HepG2 (cell line): ENCODE measurements at regions of chr6 and their contacts with region 1.

Region 1: GRCh38 chr6:63941747-63942470 is 306.3 kb downstream of the PHF3 start:
- DNase-seq: peak; percentile 94
- ATAC-seq: peak; percentile 99
- H3K4me3 ChIP-seq: no peak overlapping the region
- H3K27ac ChIP-seq: peak overlapping the region; percentile 35
- H3K4me1 ChIP-seq: peaks cover 29% of the 10 kb centered on the region
- H3K27me3 ChIP-seq: no peaks in the 10 kb centered on the region
- CTCF ChIP-seq: 0 out of 2 replicates have a peak, but pooled peaks have one; percentile 5
- EP300 ChIP-seq: peak; percentile 46 to 80; a peak in 2 of 4 replicates
- POLR2A ChIP-seq: no peak
- RAD21 ChIP-seq: no peak

Region 2: GRCh38 chr6:63790334-63790733 is 151.6 kb before region 1 on chr6:
- CTCF ChIA-PET with region 1: no interaction called
- POLR2A ChIA-PET with region 1: no interaction called
- in situ Hi-C with region 1: no loop called
- intact Hi-C with region 1: no loop called
- DNase-seq: no peak
- ATAC-seq: no peak
- H3K4me3 ChIP-seq: no peak overlapping the region
- H3K27ac ChIP-seq: no peak overlapping the region
- H3K4me1 ChIP-seq: peaks cover 8% of the 10 kb centered on the region
- H3K27me3 ChIP-seq: no peaks in the 10 kb centered on the region
- CTCF ChIP-seq: no peak
- EP300 ChIP-seq: no peak
- POLR2A ChIP-seq: no peak
- RAD21 ChIP-seq: no peak

Region 3: GRCh38 chr6:63904650-63905248 is 37.2 kb before region 1 on chr6:
- CTCF ChIA-PET with region 1: no interaction called
- POLR2A ChIA-PET with region 1: no interaction called
- in situ Hi-C with region 1: no loop called
- intact Hi-C with region 1: no loop called
- DNase-seq: no peak
- ATAC-seq: no peak
- H3K4me3 ChIP-seq: no peak overlapping the region
- H3K27ac ChIP-seq: no peak overlapping the region
- H3K4me1 ChIP-seq: no peaks in the 10 kb centered on the region
- H3K27me3 ChIP-seq: 0 out of 5 replicates have a peak, but pooled peaks cover 0 to 5% of the 10 kb centered on the region in 2 experiments
- CTCF ChIP-seq: no peak
- EP300 ChIP-seq: no peak
- POLR2A ChIP-seq: no peak
- RAD21 ChIP-seq: no peak

Region 4: GRCh38 chr6:63963769-63964315 is 21.9 kb after region 1 on chr6:
- CTCF ChIA-PET with region 1: no interaction called
- POLR2A ChIA-PET with region 1: no interaction called
- in situ Hi-C with region 1: no loop called
- intact Hi-C with region 1: no loop called
- DNase-seq: no peak
- ATAC-seq: no peak
- H3K4me3 ChIP-seq: no peak overlapping the region
- H3K27ac ChIP-seq: no peak overlapping the region
- H3K4me1 ChIP-seq: no peaks in the 10 kb centered on the region
- H3K27me3 ChIP-seq: no peaks in the 10 kb centered on the region
- CTCF ChIP-seq: 0 out of 2 replicates have a peak, but pooled peaks have one; percentile 10
- EP300 ChIP-seq: no peak
- POLR2A ChIP-seq: no peak
- RAD21 ChIP-seq: no peak

Region 5: GRCh38 chr6:64175296-64175695 is 233.4 kb after region 1 on chr6:
- CTCF ChIA-PET with region 1: no interaction called
- POLR2A ChIA-PET with region 1: no interaction called
- in situ Hi-C with region 1: no loop called
- intact Hi-C with region 1: no loop called
- DNase-seq: no peak
- ATAC-seq: no peak
- H3K4me3 ChIP-seq: no peak overlapping the region
- H3K27ac ChIP-seq: no peak overlapping the region
- H3K4me1 ChIP-seq: no peaks in the 10 kb centered on the region
- H3K27me3 ChIP-seq: no peaks in the 10 kb centered on the region
- CTCF ChIP-seq: no peak
- EP300 ChIP-seq: no peak
- POLR2A ChIP-seq: no peak
- RAD21 ChIP-seq: no peak

Region 6: DNA sequence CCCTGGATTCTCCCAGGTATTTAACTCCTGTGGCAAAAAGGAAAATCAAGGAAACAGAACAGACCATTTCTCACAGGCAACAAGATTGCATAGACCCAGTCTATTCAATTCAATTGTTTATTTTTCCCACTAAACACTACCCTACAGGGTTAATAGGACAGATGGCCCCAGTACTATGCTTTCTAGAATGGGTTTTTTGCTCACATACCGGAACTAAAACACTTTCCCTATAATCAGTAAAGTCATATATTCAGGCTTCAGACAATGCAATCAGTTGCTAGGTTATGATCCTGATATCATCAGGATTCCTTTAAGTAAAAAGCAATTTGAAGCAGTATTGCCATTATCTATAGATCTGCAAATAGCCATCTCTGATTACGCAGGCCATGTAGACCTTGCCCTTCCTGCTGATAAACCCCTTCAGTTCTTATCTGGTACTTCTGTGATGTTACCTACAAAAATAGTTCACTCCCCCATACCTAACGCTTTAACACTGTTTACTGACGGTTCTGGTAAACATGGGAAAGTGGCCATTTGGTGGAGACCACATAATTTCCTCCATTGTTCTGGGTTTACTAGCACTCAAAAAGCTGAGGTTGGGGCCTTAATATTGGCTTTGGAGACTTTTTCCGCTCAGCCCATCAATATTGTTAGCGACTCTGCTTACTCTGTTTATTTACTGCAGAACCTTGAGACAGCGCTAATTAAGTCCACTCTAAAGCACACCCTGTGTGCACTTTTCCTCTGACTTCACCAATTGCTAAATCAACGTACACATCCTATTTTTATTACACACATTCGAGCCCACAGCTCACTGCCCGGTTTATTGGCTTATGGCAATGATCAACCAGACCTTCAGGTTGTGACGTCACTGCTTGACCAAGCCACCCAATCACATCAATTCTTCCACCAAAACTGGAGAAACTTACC is 359.7 kb after region 1 on chr6:
- CTCF ChIA-PET with region 1: no interaction called
- POLR2A ChIA-PET with region 1: no interaction called
- in situ Hi-C with region 1: no loop called
- intact Hi-C with region 1: loop called (anchors 1 kb)
- DNase-seq: peak; percentile 91
- ATAC-seq: peak; percentile 96
- H3K4me3 ChIP-seq: no peak overlapping the region
- H3K27ac ChIP-seq: peak overlapping the region; percentile 41
- H3K4me1 ChIP-seq: peaks cover 37% of the 10 kb centered on the region
- H3K27me3 ChIP-seq: no peaks in the 10 kb centered on the region
- CTCF ChIP-seq: no peak
- EP300 ChIP-seq: peak in 1 of 2 experiments; percentile 86; a peak in 2 of 4 replicates
- POLR2A ChIP-seq: no peak
- RAD21 ChIP-seq: no peak